Activated naive CD4-positive, alpha-beta T cell treated with anti-CD3 and anti-CD28 coated beads for 36 hours (primary cell): ENCODE measurements at regions of chr18 and their contacts with region 1.

Region 1: DNA sequence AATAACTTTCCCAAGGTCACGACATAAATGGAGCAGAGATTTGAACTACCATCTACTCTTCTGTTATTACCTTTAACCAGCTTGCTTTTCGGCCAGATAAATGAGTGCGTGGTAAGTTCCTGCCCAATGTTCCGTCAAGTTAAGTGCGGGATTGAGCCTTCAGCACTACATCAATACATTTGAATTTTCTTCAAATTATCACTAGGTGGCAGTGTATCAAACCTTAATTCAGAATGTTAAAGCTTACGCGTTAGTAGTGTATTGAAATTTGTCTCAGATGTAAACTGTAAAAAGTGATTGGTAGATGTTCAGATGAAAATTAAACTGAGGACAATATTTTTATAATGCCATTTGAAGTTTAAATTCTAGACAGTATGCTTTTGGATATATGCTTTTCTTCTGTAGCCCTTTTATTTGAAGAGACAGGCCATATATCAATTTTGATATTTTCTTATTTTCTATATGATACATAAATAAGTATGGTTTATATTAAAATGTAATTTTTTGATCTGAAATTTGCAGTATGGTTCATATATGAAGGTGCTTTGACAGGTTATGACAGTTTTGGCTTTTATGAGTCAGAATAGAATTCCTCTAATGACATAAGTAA is 681.3 kb downstream of the ADCYAP1 start:
- DNase-seq: no peak
- H3K4me3 Mint-ChIP-seq: no peak overlapping the region
- H3K27ac Mint-ChIP-seq: no peak overlapping the region
- H3K4me1 Mint-ChIP-seq: no peaks in the 10 kb centered on the region
- H3K27me3 Mint-ChIP-seq: peaks cover 13% of the 10 kb centered on the region

Region 2: GRCh38 chr18:1522249-1522615 is 63.8 kb before region 1 on chr18:
- CTCF ChIA-PET with region 1: no interaction called
- intact Hi-C with region 1: no loop called
- DNase-seq: no peak
- H3K4me3 Mint-ChIP-seq: no peak overlapping the region
- H3K27ac Mint-ChIP-seq: no peak overlapping the region
- H3K4me1 Mint-ChIP-seq: no peaks in the 10 kb centered on the region
- H3K27me3 Mint-ChIP-seq: no peaks in the 10 kb centered on the region

Region 3: GRCh38 chr18:1604751-1605150 is 18.8 kb after region 1 on chr18:
- CTCF ChIA-PET with region 1: no interaction called
- intact Hi-C with region 1: no loop called
- DNase-seq: no peak
- H3K4me3 Mint-ChIP-seq: no peak overlapping the region
- H3K27ac Mint-ChIP-seq: no peak overlapping the region
- H3K4me1 Mint-ChIP-seq: no peaks in the 10 kb centered on the region
- H3K27me3 Mint-ChIP-seq: no peaks in the 10 kb centered on the region

Region 4: GRCh38 chr18:1663879-1664705 is 78.1 kb after region 1 on chr18:
- CTCF ChIA-PET with region 1: interaction called, 3 read pairs
- intact Hi-C with region 1: loop called (anchors 2 kb)
- DNase-seq: peak; percentile 59
- H3K4me3 Mint-ChIP-seq: no peak overlapping the region
- H3K27ac Mint-ChIP-seq: no peak overlapping the region
- H3K4me1 Mint-ChIP-seq: no peaks in the 10 kb centered on the region
- H3K27me3 Mint-ChIP-seq: peaks cover 2% of the 10 kb centered on the region

Region 5: DNA sequence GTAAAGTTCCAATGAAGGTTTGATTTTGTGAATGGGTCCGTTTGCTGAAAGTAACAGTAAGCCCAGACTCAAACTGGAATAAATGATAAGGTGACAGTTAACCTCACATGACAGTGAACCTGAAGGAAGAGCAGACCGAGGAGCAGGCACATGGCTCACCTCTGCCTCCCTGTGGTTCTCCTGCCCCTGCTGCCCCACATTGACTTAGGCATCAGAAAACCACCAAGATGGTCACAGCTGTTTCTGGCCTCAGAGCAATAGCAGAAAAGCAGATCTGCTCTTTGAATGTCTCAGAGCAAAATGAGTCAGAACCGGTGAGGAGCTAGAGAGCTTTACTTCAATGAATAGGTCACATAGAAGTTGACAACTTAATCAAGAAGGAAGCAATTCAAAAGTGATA is 497.7 kb after region 1 on chr18:
- CTCF ChIA-PET with region 1: no interaction called
- intact Hi-C with region 1: loop called (anchors 1 kb)
- DNase-seq: peak; percentile 28
- H3K4me3 Mint-ChIP-seq: no peak overlapping the region
- H3K27ac Mint-ChIP-seq: no peak overlapping the region
- H3K4me1 Mint-ChIP-seq: no peaks in the 10 kb centered on the region
- H3K27me3 Mint-ChIP-seq: no peaks in the 10 kb centered on the region